ENCODE measurements at regions of chr5 and their contacts with region 1.

Region 1: DNA sequence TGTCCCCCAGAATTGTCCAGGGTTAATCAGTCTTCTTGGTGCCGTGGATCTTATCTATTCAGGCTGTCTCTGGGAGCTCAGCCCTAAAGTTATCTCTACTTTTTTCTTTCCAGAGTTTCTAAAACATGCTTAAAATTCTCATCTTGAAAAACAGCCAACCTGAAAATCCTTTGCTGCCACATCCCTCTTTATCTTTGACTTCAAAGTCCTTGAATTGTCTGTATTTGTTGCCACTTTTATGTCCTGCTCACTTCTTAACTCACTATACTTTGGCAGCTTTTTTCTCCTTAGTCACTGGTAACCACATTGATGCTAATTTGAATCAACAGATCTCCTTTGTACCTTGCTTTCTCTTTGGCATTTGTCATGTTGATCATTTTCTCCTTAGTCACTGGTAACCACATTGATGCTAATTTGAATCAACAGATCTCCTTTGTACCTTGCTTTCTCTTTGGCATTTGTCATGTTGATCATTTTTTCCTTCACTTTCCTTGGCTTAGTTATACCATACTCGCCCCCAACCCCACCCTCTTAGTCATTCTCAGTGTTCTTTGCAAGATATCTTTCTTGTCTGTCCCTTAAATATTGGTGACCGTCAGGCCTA is 8.5 kb downstream of the DMXL1 start:
- DNase-seq: peak; percentile 70
- ATAC-seq: peak; percentile 92
- H3K4me3 Mint-ChIP-seq: peak overlapping the region; percentile 33
- H3K27ac Mint-ChIP-seq: peak overlapping the region; percentile 59
- H3K4me1 Mint-ChIP-seq: peaks cover 50% of the 10 kb centered on the region
- H3K27me3 Mint-ChIP-seq: no peaks in the 10 kb centered on the region

Region 2: DNA sequence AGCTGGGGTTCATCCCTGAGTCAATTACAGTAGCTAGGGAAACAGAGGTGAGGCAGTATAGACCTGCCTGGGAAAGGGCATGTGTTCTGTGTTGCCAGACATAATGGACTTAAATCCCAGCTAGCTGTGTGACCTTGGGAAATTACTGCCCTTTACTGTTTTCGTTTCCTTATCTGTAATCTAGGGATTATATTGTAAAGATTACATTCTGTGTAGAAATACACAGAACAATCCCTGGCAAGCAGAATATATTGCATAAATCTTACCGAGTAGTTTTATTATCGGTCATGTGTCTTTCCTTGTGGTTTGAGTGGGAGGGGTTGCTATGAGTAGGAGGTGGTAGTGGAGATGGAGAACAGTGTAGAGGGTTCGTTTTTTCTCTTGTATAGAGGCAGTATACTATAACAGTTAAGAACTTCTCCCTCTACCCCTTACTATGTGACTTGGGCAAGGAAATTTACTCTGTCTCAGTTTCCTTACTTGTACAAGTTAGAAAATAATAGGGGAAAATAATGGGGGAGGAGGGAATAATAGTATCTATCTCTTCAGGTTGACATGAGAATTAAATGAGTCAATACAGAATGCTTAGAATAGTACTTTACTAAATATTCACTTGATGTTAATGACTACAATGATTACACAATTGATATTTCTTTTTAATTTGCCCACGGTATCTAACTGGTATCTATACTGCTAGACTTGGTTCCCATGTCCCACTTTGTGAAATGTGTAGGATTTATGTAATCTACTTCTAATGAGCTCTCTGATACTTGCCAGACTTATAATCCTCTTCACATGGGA is 15.6 kb before region 1 on chr5:
- CTCF ChIA-PET with region 1: interaction called, 4 read pairs
- POLR2A ChIA-PET with region 1: no interaction called
- intact Hi-C with region 1: loop called in 1 of 2 experiments (anchors 2 kb)
- DNase-seq: peak; percentile 43
- ATAC-seq: peak; percentile 93
- H3K4me3 Mint-ChIP-seq: peak overlapping the region; percentile 1
- H3K27ac Mint-ChIP-seq: no peak overlapping the region
- H3K4me1 Mint-ChIP-seq: peaks cover 14% of the 10 kb centered on the region
- H3K27me3 Mint-ChIP-seq: no peaks in the 10 kb centered on the region

Measured in activated CD4-positive, alpha-beta T cell treated with anti-CD3 and anti-CD28 coated beads for 36 hours (primary cell).